ENCODE measurements at regions of chr11 and their contacts with region 1.

Region 1: DNA sequence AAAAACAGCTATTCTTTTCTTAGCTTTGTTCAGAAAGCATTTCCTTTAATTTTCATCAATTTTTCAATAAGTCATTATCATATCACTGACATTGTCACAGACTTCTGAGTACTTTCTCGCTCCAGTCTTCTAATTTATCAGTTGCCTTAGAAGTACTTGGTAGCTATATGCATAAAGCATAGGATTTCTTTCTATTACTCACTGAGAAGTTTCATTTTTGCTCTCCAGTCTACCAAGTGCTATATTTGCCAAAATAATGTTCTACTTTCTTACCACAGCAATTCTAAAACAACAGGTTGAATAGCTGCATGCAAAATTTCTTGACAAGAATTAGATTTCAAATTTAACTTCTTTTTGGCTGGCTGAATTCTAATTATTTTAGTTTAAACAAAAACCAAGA is 116.3 kb downstream of the STK33 start:
- DNase-seq: no peak
- ATAC-seq: no peak
- H3K4me3 ChIP-seq: no peak overlapping the region
- H3K27ac ChIP-seq: no peak overlapping the region
- H3K4me1 ChIP-seq: no peaks in the 10 kb centered on the region
- H3K27me3 ChIP-seq: no peaks in the 10 kb centered on the region
- CTCF ChIP-seq: no peak
- POLR2A ChIP-seq: no peak

Region 2: DNA sequence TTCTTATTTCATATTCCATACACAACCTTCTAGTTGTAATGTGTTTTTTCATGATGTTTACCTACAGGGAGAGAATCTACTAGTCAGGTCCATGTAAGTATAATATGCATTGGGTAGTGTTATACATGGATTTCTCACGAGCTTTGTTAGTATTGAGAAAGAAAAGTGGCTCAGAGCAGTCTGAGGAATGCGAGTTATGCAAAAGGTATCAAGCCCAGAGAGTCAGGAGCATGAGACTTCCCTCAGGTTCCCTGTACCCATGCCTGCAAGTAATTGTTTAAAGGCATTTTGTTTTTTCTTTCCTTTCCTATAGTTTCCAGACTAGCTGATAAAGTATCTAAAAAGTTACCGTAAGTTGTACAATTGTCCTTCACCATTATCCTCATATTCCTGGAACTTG is 50.3 kb after region 1 on chr11:
- in situ Hi-C with region 1: no loop called
- intact Hi-C with region 1: loop called (anchors 2 kb)
- DNase-seq: no peak
- ATAC-seq: no peak
- H3K4me3 ChIP-seq: no peak overlapping the region
- H3K27ac ChIP-seq: no peak overlapping the region
- H3K4me1 ChIP-seq: no peaks in the 10 kb centered on the region
- H3K27me3 ChIP-seq: no peaks in the 10 kb centered on the region
- CTCF ChIP-seq: no peak
- POLR2A ChIP-seq: no peak